Ascending aorta (tissue), 2 donors: ENCODE measurements at regions of chrX and their contacts with region 1.

Region 1: DNA sequence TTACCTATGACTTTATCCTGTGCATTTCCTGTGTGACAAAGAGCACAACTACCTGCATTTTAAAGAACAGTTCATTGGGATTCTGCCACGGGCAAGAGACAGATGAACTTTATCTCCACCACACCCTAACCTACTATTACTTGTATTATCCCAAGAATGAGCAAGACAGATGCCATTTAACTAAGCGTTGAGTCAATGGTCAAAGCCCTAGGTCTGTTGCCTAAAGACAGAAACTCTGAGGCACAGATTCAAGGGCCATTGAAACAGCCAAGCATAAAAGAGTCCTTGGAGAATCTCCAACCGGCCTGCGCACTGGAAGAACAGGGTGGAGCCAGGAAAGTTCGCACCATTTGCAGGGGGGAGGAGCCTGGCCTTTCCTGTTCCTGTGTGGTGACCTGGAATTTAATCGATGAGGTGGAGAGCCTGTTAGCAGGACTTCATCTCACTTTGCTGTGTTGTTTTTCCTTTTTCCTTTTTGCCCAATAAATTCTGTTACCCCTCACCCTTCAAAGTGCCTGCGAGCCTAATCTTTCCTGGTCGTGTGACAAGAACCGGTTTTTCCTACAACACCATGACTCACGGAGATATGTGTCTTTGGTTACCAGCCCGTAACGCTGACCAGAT is 146.4 kb upstream of the DIAPH2 start:
- DNase-seq: no peak
- H3K4me3 ChIP-seq: no peak overlapping the region
- H3K27ac ChIP-seq: peak overlapping the region in 1 of 2 donors; percentile 45
- H3K4me1 ChIP-seq: no peaks in the 10 kb centered on the region
- H3K27me3 ChIP-seq: no peaks in the 10 kb centered on the region
- CTCF ChIP-seq: no peak

Region 2: GRCh38 chrX:96407057-96407456 is 131.2 kb before region 1 on chrX:
- intact Hi-C with region 1: loop called (anchors 10 kb)
- DNase-seq: no peak
- H3K4me3 ChIP-seq: no peak overlapping the region
- H3K27ac ChIP-seq: peak overlapping the region; percentile 21 to 33
- H3K4me1 ChIP-seq: no peaks in the 10 kb centered on the region
- H3K27me3 ChIP-seq: no peaks in the 10 kb centered on the region
- CTCF ChIP-seq: no peak